ENCODE measurements at regions of chr6 and their contacts with region 1.

Region 1: GRCh38 chr6:14144678-14145113 is 27.1 kb downstream of the CD83 start:
- DNase-seq: peak; percentile 53 to 85 (median 62)
- ATAC-seq: peak; percentile 89
- H3K4me3 ChIP-seq: no peak overlapping the region
- H3K4me3 Mint-ChIP-seq: no peak overlapping the region
- H3K27ac ChIP-seq: no peak overlapping the region
- H3K27ac Mint-ChIP-seq: no peak overlapping the region
- H3K4me1 ChIP-seq: peaks cover 6% of the 10 kb centered on the region
- H3K4me1 Mint-ChIP-seq: no peaks in the 10 kb centered on the region
- H3K27me3 ChIP-seq: no peaks in the 10 kb centered on the region
- H3K27me3 Mint-ChIP-seq: no peaks in the 10 kb centered on the region
- CTCF ChIP-seq: peak; percentile 91

Region 2: DNA sequence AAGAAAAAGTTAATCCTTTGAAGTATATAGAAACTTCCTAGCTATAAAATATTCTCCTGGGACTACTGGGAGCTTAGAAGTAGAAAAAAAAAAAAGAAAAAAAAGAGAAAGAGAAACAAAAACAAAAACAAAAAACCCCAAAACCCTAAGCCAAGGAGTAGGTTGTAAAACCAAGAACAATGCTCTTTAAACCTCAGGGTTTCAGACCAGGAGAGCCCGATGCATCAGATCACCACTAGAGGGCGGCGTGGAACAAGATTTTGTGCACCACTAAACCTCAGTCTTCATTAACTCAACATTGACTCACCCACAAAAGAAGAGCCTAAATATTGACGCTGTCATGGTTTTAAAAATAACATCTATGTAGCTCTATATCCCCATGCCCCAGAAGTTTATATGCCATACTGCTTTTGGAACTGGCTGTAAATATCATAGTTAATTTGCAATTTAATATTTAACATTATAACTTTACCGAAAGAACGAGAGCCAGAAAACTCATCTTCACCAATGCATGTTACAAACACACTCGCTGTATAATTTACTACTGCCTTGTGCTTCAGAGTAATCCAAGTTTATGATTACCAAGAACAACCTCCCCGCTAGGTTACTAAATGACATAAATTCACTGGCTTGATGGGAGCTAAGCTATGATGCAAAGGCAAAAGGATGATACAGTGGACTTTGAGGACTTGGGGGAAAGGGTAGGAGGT is 349.5 kb before region 1 on chr6:
- CTCF ChIA-PET with region 1: no interaction called
- POLR2A ChIA-PET with region 1: no interaction called
- intact Hi-C with region 1: loop called (anchors 1 to 2 kb)
- DNase-seq: peak; percentile 73 to 92 (median 82)
- ATAC-seq: peak; percentile 98
- H3K4me3 ChIP-seq: no peak overlapping the region
- H3K4me3 Mint-ChIP-seq: no peak overlapping the region
- H3K27ac ChIP-seq: no peak overlapping the region
- H3K27ac Mint-ChIP-seq: no peak overlapping the region
- H3K4me1 ChIP-seq: no peaks in the 10 kb centered on the region
- H3K4me1 Mint-ChIP-seq: no peaks in the 10 kb centered on the region
- H3K27me3 ChIP-seq: no peaks in the 10 kb centered on the region
- H3K27me3 Mint-ChIP-seq: no peaks in the 10 kb centered on the region
- CTCF ChIP-seq: peak; percentile 90

Region 3: DNA sequence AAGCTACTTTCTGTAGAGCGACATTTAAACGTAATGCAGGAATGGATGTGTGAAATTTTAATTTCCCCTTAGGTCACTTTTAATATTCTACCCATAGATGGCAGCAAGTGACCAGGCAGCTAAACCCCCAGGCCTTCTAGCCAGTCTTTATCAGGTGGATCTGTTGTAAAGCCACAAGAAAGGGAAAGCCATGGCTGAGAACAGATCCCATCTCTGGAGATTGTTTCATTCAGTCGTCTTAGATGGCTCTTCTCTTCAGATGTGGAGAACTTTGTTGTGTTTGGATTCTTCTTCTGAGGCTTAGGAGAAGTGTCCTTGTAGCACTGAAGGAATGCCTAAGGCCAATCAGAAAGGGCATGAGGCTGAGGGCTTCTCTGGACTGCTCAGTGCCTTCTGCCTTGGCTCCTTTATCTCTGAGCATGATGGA is 235.7 kb before region 1 on chr6:
- CTCF ChIA-PET with region 1: interaction called, 5 read pairs
- POLR2A ChIA-PET with region 1: interaction called, 3 read pairs
- intact Hi-C with region 1: loop called (anchors 1 kb)
- DNase-seq: peak in 13 of 14 experiments; percentile 5 to 82 (median 25)
- ATAC-seq: peak; percentile 59
- H3K4me3 ChIP-seq: no peak overlapping the region
- H3K4me3 Mint-ChIP-seq: no peak overlapping the region
- H3K27ac ChIP-seq: no peak overlapping the region
- H3K27ac Mint-ChIP-seq: no peak overlapping the region
- H3K4me1 ChIP-seq: peaks cover 3% of the 10 kb centered on the region
- H3K4me1 Mint-ChIP-seq: peaks cover 7% of the 10 kb centered on the region
- H3K27me3 ChIP-seq: peaks cover 5 to 13% of the 10 kb centered on the region in 2 experiments
- H3K27me3 Mint-ChIP-seq: peaks cover 50% of the 10 kb centered on the region
- CTCF ChIP-seq: peak; percentile 69